Activated CD8-positive, alpha-beta T cell treated with anti-CD3 and anti-CD28 coated beads, Interleukin-2, amount 10 ng/mL, durations not matched to agents 7 days and 5 days (primary cell): ENCODE measurements at regions of chr19 and their contacts with region 1.

Region 1: DNA sequence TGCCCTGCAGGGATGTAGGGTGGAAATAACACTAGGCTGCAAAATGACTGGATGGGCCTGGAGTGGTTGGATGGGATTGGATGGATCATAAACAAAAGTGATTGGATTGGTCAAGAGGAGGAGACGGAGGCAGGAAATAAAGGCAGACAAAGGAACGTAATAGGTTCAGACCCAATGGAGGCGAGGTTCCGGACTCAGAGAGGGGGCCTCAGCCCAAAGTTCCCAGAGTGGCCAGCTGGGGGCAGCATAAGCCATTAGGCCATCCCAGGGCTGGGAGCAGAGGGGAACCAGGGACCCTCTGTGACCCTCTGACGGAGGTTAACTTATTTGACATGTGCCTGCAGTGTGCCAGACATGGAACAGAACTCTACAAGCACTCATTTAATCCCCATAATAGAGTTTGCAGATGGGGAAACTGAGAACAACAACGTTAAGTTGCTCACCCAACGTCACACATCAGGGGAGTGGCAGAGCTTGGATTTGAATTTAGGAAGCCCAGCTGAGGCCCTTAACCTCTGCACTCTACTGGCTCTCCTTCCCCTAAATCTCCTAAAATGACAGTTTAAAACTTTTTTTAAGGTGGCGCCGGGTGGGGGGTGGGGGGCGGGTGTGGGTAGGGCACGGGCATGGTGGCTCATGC is 15.3 kb upstream of the MAP1S start:
- DNase-seq: peak; percentile 74
- ATAC-seq: peak; percentile 93
- H3K4me3 Mint-ChIP-seq: no peak overlapping the region
- H3K27ac Mint-ChIP-seq: no peak overlapping the region
- H3K4me1 Mint-ChIP-seq: no peaks in the 10 kb centered on the region
- H3K27me3 Mint-ChIP-seq: peaks cover 3% of the 10 kb centered on the region

Region 2: DNA sequence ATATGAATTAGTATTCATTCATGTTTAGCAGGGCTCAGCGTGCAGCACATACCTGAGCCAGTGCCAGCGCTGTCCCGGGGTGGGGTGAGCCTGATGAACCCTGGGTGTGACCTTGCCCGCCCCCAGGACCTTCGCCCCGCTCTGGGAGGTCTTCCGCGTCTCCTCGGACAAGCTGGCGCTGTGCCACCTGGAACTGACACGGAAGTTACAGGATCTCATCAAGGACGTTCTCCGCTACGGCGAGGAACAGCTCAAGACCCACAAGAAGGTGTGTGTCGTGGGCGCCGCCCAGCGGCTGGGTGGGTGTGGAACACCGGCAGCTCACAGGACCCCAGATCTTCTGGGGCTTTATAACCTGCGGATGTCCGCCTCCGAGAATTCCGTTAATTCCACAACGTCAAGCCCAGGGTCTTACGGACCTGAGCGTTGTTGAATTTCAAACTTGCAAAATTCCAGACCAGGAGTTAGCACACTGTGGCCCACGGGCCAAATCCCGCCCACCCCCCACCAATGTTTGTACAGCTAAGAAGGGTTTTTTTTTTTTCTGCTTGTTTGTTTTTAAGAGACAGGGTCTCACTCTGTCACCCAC is 62.7 kb after region 1 on chr19:
- CTCF ChIA-PET with region 1: interaction called, 20 read pairs
- POLR2A ChIA-PET with region 1: no interaction called
- DNase-seq: peak; percentile 51
- ATAC-seq: no peak
- H3K4me3 Mint-ChIP-seq: no peak overlapping the region
- H3K27ac Mint-ChIP-seq: no peak overlapping the region
- H3K4me1 Mint-ChIP-seq: peaks cover 9% of the 10 kb centered on the region
- H3K27me3 Mint-ChIP-seq: no peaks in the 10 kb centered on the region

Region 3: DNA sequence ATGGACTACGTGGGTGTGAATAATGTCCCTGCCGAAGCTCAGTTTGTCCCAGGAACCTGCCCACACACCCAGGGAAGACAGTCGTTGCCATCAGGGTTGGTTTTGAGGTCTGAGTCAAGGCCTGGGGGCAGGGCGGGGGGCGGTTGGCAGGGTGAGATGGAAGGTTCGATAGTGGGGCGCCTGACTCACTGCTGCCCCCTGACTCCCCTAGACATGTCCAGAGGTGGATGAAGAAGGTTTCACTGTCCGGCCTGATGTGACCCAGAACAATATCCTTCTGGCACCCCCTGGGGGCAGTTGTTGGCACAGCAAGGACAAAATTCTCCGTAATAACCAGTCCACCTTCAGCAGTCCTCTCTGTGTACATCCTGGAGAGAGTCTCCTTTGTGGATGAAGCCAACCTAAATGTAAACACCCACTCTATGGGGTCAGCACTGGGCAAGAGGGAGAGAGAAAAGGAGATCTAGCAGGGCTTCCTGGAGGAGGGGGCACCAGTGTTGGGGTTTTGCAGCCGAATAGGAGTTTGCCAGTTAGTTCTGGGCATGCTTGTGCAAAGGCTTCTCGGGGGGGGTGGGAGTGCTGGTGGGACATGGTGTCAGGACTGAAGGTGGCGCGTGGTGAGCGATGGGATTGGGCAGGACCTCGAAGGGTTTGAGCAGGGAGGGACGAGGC is 71.4 kb after region 1 on chr19:
- CTCF ChIA-PET with region 1: interaction called, 18 read pairs
- POLR2A ChIA-PET with region 1: no interaction called
- DNase-seq: peak; percentile 46
- ATAC-seq: peak; percentile 24
- H3K4me3 Mint-ChIP-seq: no peak overlapping the region
- H3K27ac Mint-ChIP-seq: no peak overlapping the region
- H3K4me1 Mint-ChIP-seq: peaks cover 14% of the 10 kb centered on the region
- H3K27me3 Mint-ChIP-seq: no peaks in the 10 kb centered on the region